CD8-positive, alpha-beta T cell (primary cell): ENCODE measurements at regions of chr22 and their contacts with region 1.

Region 1: GRCh38 chr22:42780070-42780540 is 59.4 kb upstream of the A4GALT start:
- DNase-seq: peak in 8 of 9 experiments; percentile 6 to 83 (median 42)
- ATAC-seq: peak; percentile 42
- H3K4me3 ChIP-seq: no peak overlapping the region
- H3K4me3 Mint-ChIP-seq: no peak overlapping the region
- H3K27ac ChIP-seq: no peak overlapping the region
- H3K27ac Mint-ChIP-seq: no peak overlapping the region
- H3K4me1 ChIP-seq: no peaks in the 10 kb centered on the region
- H3K4me1 Mint-ChIP-seq: no peaks in the 10 kb centered on the region
- H3K27me3 ChIP-seq: no peaks in the 10 kb centered on the region
- H3K27me3 Mint-ChIP-seq: no peaks in the 10 kb centered on the region
- CTCF ChIP-seq: peak; percentile 85

Region 2: GRCh38 chr22:42670921-42671709 is 109.0 kb before region 1 on chr22:
- CTCF ChIA-PET with region 1: no interaction called
- POLR2A ChIA-PET with region 1: no interaction called
- intact Hi-C with region 1: no loop called
- DNase-seq: no peak
- ATAC-seq: no peak
- H3K4me3 ChIP-seq: no peak overlapping the region
- H3K4me3 Mint-ChIP-seq: no peak overlapping the region
- H3K27ac ChIP-seq: no peak overlapping the region
- H3K27ac Mint-ChIP-seq: no peak overlapping the region
- H3K4me1 ChIP-seq: peaks cover 3% of the 10 kb centered on the region
- H3K4me1 Mint-ChIP-seq: peaks cover 7% of the 10 kb centered on the region
- H3K27me3 ChIP-seq: peaks cover 0 to 2% of the 10 kb centered on the region in 2 experiments
- H3K27me3 Mint-ChIP-seq: peaks cover 2% of the 10 kb centered on the region
- CTCF ChIP-seq: no peak

Region 3: GRCh38 chr22:42829302-42829701 is 49.2 kb after region 1 on chr22:
- CTCF ChIA-PET with region 1: no interaction called
- POLR2A ChIA-PET with region 1: no interaction called
- intact Hi-C with region 1: loop called in 1 of 2 experiments (anchors 2 kb)
- DNase-seq: no peak
- ATAC-seq: no peak
- H3K4me3 ChIP-seq: no peak overlapping the region
- H3K4me3 Mint-ChIP-seq: peak overlapping the region; percentile 41
- H3K27ac ChIP-seq: no peak overlapping the region
- H3K27ac Mint-ChIP-seq: peak overlapping the region; percentile 50
- H3K4me1 ChIP-seq: peaks cover 8% of the 10 kb centered on the region
- H3K4me1 Mint-ChIP-seq: peaks cover 20% of the 10 kb centered on the region
- H3K27me3 ChIP-seq: no peaks in the 10 kb centered on the region
- H3K27me3 Mint-ChIP-seq: no peaks in the 10 kb centered on the region
- CTCF ChIP-seq: no peak

Region 4: GRCh38 chr22:42863349-42863961 is 83.3 kb after region 1 on chr22:
- CTCF ChIA-PET with region 1: interaction called, 18 read pairs
- POLR2A ChIA-PET with region 1: no interaction called
- intact Hi-C with region 1: loop called in 1 of 2 experiments (anchors 1 kb)
- DNase-seq: peak in 2 of 9 experiments; percentile 32
- ATAC-seq: peak; percentile 45
- H3K4me3 ChIP-seq: no peak overlapping the region
- H3K4me3 Mint-ChIP-seq: no peak overlapping the region
- H3K27ac ChIP-seq: no peak overlapping the region
- H3K27ac Mint-ChIP-seq: no peak overlapping the region
- H3K4me1 ChIP-seq: no peaks in the 10 kb centered on the region
- H3K4me1 Mint-ChIP-seq: peaks cover 12% of the 10 kb centered on the region
- H3K27me3 ChIP-seq: no peaks in the 10 kb centered on the region
- H3K27me3 Mint-ChIP-seq: no peaks in the 10 kb centered on the region
- CTCF ChIP-seq: no peak

Region 5: GRCh38 chr22:43036282-43036829 is 256.3 kb after region 1 on chr22:
- CTCF ChIA-PET with region 1: interaction called, 11 read pairs
- POLR2A ChIA-PET with region 1: no interaction called
- intact Hi-C with region 1: loop called in 1 of 2 experiments (anchors 1 kb)
- DNase-seq: no peak
- ATAC-seq: no peak
- H3K4me3 ChIP-seq: no peak overlapping the region
- H3K4me3 Mint-ChIP-seq: no peak overlapping the region
- H3K27ac ChIP-seq: no peak overlapping the region
- H3K27ac Mint-ChIP-seq: no peak overlapping the region
- H3K4me1 ChIP-seq: no peaks in the 10 kb centered on the region
- H3K4me1 Mint-ChIP-seq: peaks cover 4% of the 10 kb centered on the region
- H3K27me3 ChIP-seq: no peaks in the 10 kb centered on the region
- H3K27me3 Mint-ChIP-seq: no peaks in the 10 kb centered on the region
- CTCF ChIP-seq: no peak

Region 6: GRCh38 chr22:43136255-43136654 is 356.1 kb after region 1 on chr22:
- CTCF ChIA-PET with region 1: no interaction called
- POLR2A ChIA-PET with region 1: no interaction called
- intact Hi-C with region 1: loop called in 1 of 2 experiments (anchors 5 kb)
- DNase-seq: peak in 8 of 9 experiments; percentile 23 to 67 (median 56)
- ATAC-seq: peak; percentile 75
- H3K4me3 ChIP-seq: no peak overlapping the region
- H3K4me3 Mint-ChIP-seq: no peak overlapping the region
- H3K27ac ChIP-seq: no peak overlapping the region
- H3K27ac Mint-ChIP-seq: peak overlapping the region; percentile 66
- H3K4me1 ChIP-seq: no peaks in the 10 kb centered on the region
- H3K4me1 Mint-ChIP-seq: peaks cover 5% of the 10 kb centered on the region
- H3K27me3 ChIP-seq: no peaks in the 10 kb centered on the region
- H3K27me3 Mint-ChIP-seq: no peaks in the 10 kb centered on the region
- CTCF ChIP-seq: peak; percentile 57